AG04450 (cell line): ENCODE measurements at regions of chr16 and their contacts with region 1.

Region 1: DNA sequence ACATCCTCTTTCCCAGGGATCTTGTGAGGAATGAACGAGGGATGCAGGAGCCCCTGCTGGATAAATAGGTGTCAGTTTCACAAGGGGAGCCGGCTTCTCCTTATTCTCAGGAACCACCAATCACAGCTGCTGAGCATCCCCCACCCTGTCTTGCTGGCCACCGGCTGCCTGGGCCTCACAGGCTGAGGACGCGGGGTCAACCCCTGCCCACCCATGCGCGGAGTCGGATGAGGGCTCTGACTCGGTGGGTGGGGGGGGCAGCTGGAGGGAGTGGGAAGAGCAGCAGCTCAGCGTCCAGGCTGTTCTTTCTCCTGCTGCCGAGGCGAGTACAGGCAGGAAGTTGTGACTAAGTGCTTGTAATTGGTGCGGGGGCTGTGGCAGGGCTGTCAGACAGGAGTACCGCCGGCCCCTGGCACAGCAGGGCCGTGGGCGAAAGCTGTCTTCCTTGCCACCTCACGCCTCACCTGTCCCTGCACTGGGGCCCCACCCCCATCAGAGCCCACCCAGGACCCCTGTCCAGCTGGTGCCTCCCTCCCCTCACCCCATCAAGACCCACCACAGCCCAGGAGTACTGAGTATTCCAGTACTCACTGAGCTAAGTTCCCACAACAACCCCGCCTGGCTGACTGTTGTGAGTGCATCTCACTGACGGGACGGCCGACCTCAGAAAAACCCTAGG is 11.0 kb upstream of the DPEP1 start:
- DNase-seq: peak; percentile 72
- H3K4me3 ChIP-seq: peak overlapping the region; percentile 22
- H3K27ac ChIP-seq: peak overlapping the region; percentile 77
- H3K27me3 ChIP-seq: no peaks in the 10 kb centered on the region
- CTCF ChIP-seq: 0 out of 2 replicates have a peak, but pooled peaks have one; percentile 12

Region 2: DNA sequence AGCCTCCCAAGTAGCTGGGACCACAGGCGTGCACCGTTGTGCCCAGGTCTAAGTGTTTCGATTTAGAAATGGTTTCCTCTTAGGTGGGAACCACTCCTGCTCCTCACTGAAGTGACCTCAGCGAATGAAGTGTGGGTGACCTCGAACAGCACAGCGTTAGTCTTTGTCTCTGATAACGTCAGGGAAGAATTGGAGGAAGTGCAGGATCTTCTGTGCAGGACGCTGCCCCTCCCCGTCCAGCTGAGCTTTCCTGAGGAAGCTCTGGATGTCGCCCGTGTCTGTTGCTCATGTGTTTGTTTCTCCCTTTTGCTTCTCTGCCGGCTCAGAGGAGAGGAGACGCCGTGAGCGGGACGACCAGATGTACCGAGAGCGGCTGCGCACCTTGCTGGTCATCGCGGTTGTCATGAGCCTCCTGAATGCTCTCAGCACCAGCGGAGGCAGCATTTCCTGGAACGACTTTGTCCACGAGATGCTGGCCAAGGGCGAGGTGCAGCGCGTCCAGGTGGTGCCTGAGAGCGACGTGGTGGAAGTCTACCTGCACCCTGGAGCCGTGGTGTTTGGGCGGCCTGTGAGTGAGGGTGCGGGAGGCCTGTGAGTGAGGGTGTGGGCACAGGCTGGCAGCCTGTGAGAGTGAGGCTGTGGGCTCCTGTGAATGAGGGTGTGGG is 78.6 kb before region 1 on chr16:
- CTCF ChIA-PET with region 1: no interaction called
- POLR2A ChIA-PET with region 1: interaction called, 10 read pairs
- DNase-seq: no peak
- H3K4me3 ChIP-seq: no peak overlapping the region
- H3K27ac ChIP-seq: no peak overlapping the region
- H3K27me3 ChIP-seq: no peaks in the 10 kb centered on the region
- CTCF ChIP-seq: no peak

Region 3: DNA sequence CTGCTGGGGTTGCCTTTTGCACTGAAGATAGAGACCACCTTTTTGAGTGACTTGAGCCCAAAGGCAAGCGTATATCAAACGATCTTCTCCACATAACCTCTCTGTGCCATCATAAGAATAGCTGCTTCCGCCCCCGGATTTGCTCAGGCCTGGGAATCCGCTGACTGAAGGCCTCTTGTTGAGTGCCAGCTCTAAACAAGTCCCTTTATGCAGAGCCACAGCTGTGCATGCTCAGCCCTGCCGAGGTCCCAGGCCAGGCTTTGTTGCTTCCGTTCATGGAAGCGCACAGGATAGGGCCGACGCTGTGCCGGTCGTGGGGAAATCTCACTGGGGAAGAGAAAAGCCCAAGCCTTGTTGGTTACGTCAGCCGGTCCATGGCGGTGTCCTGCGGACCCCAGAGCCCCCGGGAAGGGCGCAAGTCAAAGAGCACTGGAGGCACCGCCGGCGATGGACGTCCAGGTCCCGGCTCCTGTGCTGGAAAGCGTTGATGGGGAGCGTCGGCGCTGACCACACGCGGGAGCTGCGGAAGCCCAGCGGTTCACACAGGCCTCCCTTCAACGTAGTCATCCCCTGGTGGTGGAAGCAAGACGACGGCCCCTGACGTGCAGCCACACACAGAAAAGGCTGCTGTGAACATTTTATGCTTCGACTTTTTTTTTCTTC is 65.4 kb before region 1 on chr16:
- CTCF ChIA-PET with region 1: no interaction called
- POLR2A ChIA-PET with region 1: no interaction called
- DNase-seq: no peak
- H3K4me3 ChIP-seq: no peak overlapping the region
- H3K27ac ChIP-seq: no peak overlapping the region
- H3K27me3 ChIP-seq: no peaks in the 10 kb centered on the region
- CTCF ChIP-seq: no peak

Region 4: GRCh38 chr16:89581045-89581690 is 21.2 kb before region 1 on chr16:
- CTCF ChIA-PET with region 1: no interaction called
- POLR2A ChIA-PET with region 1: interaction called, 17 read pairs
- DNase-seq: peak; percentile 96
- H3K4me3 ChIP-seq: no peak overlapping the region
- H3K27ac ChIP-seq: peak overlapping the region; percentile 97
- H3K27me3 ChIP-seq: no peaks in the 10 kb centered on the region
- CTCF ChIP-seq: no peak